ENCODE measurements at regions of chr15 and their contacts with region 1.

Region 1: GRCh38 chr15:99755692-99756409 is 22.6 kb upstream of the LYSMD4 start:
- H3K4me3 ChIP-seq: no peak overlapping the region
- H3K27ac ChIP-seq: no peak overlapping the region
- H3K4me1 ChIP-seq: no peaks in the 10 kb centered on the region
- CTCF ChIP-seq: peak; percentile 65

Region 2: DNA sequence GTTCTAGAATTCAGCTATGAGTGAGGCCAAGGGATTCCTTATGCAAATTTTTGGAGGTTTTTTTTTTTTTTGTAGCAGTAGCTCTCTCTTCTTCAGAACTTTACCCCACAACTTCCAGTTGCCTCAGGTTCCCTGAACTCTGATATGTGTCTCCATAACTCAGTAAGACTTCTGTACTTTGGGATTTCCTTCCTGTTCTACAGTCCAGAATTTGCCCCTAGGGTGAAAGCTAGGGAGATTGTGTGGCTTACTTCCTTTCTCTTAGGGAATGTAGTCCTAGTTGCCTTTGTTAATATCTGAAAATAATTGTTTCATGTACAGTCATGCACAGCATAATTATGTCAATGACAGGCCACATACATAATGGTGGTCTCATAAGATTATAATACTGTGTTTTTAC is 473.7 kb before region 1 on chr15:
- CTCF ChIA-PET with region 1: interaction called, 21 read pairs
- POLR2A ChIA-PET with region 1: no interaction called
- H3K4me3 ChIP-seq: no peak overlapping the region
- H3K27ac ChIP-seq: no peak overlapping the region
- H3K4me1 ChIP-seq: no peaks in the 10 kb centered on the region
- CTCF ChIP-seq: no peak

Region 3: DNA sequence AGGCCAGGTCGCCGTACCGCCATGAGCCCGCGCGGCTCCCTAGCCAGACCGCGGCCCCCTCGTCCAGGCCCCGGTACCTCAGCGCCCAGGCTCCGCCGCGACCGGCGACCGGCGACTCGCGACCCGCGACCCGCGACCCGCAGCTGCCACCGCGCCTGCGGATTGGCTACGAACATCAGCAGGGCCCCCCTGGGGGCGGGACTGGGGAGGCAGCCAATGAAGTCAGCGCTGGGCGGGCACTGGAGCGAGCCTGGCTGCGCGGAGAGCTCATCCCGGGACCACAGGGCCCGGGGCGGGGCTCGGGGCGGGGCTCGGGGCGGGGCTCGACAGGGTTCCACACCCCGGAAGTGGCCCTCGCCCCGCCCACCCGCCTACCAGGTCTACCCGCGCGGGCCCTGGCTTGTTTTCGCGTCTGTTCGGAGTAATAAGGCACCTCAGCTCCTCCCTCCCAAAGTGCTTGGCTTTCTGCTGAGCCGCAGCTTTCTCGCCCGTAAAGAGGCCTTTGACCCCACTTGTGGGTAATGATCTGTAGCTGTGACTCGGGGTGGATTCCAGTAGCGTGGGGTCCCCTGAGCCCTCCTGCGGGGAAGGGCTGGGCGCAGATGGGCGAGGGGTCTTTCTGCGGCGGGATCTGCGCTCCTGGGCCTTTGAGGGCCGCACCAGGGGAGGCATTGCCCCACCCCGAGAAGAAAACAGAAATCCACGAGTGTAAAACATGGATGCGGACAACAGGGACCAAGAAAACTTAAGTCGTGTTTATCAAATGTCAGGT is 22.4 kb before region 1 on chr15 and contains the start of gene LYSMD4:
- CTCF ChIA-PET with region 1: interaction called, 22 read pairs
- POLR2A ChIA-PET with region 1: interaction called, 8 read pairs
- H3K4me3 ChIP-seq: peak within 1 kb of the TSS; percentile 81
- H3K27ac ChIP-seq: peak within 1 kb of the TSS; percentile 67
- H3K4me1 ChIP-seq: peaks cover 5% of the 10 kb centered on the region; the same call in 1 of the 2 replicates
- CTCF ChIP-seq: no peak

Region 4: DNA sequence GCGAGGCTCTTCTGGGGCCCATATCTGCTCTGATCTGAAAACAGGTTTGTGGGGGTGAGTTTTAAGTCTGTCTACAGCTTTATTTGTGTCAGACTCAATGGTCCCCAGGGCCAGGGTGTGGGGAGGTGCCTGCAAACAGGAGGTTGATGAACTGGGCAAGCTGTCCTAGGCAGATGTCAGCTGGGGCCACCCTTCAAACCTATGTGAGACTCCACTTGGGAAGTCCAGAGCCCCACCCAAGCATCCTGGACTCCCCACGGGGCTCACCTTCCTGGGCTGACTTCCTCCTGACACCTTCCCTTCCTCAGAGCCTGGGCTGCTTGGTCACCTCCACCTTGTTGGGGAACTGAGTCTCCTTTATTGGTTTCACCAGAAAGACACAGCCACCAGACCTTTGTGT is 14.0 kb before region 1 on chr15:
- CTCF ChIA-PET with region 1: interaction called, 18 read pairs
- POLR2A ChIA-PET with region 1: no interaction called
- H3K4me3 ChIP-seq: no peak overlapping the region
- H3K27ac ChIP-seq: no peak overlapping the region
- H3K4me1 ChIP-seq: no peaks in the 10 kb centered on the region
- CTCF ChIP-seq: no peak

Region 5: GRCh38 chr15:99845009-99845408 is 89.2 kb after region 1 on chr15:
- CTCF ChIA-PET with region 1: no interaction called
- POLR2A ChIA-PET with region 1: no interaction called
- H3K4me3 ChIP-seq: no peak overlapping the region
- H3K27ac ChIP-seq: no peak overlapping the region
- H3K4me1 ChIP-seq: no peaks in the 10 kb centered on the region
- CTCF ChIP-seq: no peak

Region 6: GRCh38 chr15:100671858-100672543 is 916.1 kb after region 1 on chr15:
- CTCF ChIA-PET with region 1: no interaction called
- POLR2A ChIA-PET with region 1: no interaction called
- H3K4me3 ChIP-seq: no peak overlapping the region
- H3K27ac ChIP-seq: no peak overlapping the region
- H3K4me1 ChIP-seq: no peaks in the 10 kb centered on the region
- CTCF ChIP-seq: no peak